Caco-2 (cell line): ENCODE measurements at regions of chr3 and their contacts with region 1.

Region 1: DNA sequence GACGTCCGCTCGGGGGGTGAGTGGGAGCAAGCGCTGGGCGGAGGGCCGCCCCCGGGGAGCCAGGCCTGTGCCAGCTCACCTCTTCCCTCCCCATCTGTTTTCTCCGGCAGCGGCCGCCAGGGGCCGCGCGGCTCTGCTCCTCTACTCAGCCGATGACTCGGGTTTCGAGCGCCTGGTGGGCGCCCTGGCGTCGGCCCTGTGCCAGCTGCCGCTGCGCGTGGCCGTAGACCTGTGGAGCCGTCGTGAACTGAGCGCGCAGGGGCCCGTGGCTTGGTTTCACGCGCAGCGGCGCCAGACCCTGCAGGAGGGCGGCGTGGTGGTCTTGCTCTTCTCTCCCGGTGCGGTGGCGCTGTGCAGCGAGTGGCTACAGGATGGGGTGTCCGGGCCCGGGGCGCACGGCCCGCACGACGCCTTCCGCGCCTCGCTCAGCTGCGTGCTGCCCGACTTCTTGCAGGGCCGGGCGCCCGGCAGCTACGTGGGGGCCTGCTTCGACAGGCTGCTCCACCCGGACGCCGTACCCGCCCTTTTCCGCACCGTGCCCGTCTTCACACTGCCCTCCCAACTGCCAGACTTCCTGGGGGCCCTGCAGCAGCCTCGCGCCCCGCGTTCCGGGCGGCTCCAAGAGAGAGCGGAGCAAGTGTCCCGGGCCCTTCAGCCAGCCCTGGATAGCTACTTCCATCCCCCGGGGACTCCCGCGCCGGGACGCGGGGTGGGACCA is 632 bp upstream of the CRELD1 start:
- DNase-seq: peak; percentile 81 to 85
- H3K4me3 ChIP-seq: peak overlapping the region; percentile 92
- H3K4me3 Mint-ChIP-seq: peak overlapping the region; percentile 88
- H3K27ac Mint-ChIP-seq: peak overlapping the region; percentile 96
- H3K4me1 ChIP-seq: peaks cover 6% of the 10 kb centered on the region; the same call in 1 of the 2 replicates
- H3K4me1 Mint-ChIP-seq: peaks cover 8% of the 10 kb centered on the region
- H3K27me3 ChIP-seq: no peaks in the 10 kb centered on the region
- H3K27me3 Mint-ChIP-seq: no peaks in the 10 kb centered on the region
- CTCF ChIP-seq: peak; percentile 67 to 89

Region 2: DNA sequence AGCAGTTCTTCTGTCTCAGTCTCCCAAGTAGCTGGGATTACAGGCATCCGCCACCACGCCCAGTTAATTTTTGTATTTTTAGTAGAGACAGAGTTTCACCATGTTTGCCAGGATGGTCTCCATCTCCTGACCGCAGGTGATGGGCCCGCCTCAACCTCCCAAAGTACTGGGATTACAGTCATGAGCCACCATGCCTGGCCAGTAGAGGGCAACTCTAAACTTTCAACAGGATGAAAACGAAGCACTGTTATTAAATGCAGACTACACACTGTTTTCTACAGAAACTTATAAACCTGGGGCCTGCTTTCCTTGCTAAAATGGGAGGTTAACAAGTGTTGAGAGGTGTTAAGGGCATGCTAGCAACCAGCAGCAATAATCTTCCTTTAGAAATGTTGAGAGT is 132.5 kb before region 1 on chr3:
- CTCF ChIA-PET with region 1: no interaction called
- POLR2A ChIA-PET with region 1: no interaction called
- intact Hi-C with region 1: no loop called
- DNase-seq: no peak
- H3K4me3 ChIP-seq: no peak overlapping the region
- H3K4me3 Mint-ChIP-seq: no peak overlapping the region
- H3K27ac Mint-ChIP-seq: no peak overlapping the region
- H3K4me1 ChIP-seq: no peaks in the 10 kb centered on the region
- H3K4me1 Mint-ChIP-seq: no peaks in the 10 kb centered on the region
- H3K27me3 ChIP-seq: no peaks in the 10 kb centered on the region
- H3K27me3 Mint-ChIP-seq: no peaks in the 10 kb centered on the region
- CTCF ChIP-seq: peak in 1 of 2 experiments; percentile 40

Region 3: DNA sequence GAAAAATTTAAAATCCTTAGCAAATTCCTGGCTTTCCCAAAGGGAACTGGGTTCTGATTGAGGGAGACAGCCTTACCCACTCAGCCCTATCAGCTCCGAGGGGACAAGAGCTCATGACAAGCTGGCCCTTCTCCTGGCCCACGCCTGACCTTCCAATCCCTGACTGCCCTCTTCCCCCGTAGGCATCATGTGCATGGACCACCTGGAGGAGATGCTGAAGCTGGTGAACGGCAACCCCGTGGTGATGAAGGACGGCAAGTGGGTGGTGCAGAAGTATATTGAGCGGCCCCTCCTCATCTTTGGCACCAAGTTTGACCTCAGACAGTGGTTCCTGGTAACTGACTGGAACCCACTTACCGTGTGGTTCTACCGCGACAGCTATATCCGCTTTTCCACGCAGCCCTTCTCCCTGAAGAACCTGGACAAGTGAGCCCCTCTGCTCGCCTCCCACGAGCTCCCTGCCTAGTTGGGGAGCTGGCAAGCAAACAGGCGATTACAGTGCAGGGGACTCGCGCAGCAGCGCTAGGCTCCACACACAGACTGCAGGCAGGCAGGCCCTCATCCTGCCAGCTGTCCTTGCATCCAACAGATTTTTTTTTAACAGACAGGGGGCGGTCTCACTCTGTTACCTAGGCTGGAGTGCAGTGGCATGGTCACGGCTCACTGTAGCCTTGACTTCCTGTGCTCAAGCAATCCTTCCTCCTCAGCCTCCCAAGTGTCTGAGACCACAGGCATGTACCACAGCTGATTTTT is 106.0 kb before region 1 on chr3:
- CTCF ChIA-PET with region 1: interaction called, 3 read pairs
- POLR2A ChIA-PET with region 1: interaction called, 5 read pairs
- intact Hi-C with region 1: loop called (anchors 5 kb)
- DNase-seq: peak in 1 of 2 experiments; percentile 64
- H3K4me3 ChIP-seq: no peak overlapping the region
- H3K4me3 Mint-ChIP-seq: no peak overlapping the region
- H3K27ac Mint-ChIP-seq: no peak overlapping the region
- H3K4me1 ChIP-seq: no peaks in the 10 kb centered on the region
- H3K4me1 Mint-ChIP-seq: no peaks in the 10 kb centered on the region
- H3K27me3 ChIP-seq: no peaks in the 10 kb centered on the region
- H3K27me3 Mint-ChIP-seq: no peaks in the 10 kb centered on the region
- CTCF ChIP-seq: peak; percentile 8 to 31

Region 4: DNA sequence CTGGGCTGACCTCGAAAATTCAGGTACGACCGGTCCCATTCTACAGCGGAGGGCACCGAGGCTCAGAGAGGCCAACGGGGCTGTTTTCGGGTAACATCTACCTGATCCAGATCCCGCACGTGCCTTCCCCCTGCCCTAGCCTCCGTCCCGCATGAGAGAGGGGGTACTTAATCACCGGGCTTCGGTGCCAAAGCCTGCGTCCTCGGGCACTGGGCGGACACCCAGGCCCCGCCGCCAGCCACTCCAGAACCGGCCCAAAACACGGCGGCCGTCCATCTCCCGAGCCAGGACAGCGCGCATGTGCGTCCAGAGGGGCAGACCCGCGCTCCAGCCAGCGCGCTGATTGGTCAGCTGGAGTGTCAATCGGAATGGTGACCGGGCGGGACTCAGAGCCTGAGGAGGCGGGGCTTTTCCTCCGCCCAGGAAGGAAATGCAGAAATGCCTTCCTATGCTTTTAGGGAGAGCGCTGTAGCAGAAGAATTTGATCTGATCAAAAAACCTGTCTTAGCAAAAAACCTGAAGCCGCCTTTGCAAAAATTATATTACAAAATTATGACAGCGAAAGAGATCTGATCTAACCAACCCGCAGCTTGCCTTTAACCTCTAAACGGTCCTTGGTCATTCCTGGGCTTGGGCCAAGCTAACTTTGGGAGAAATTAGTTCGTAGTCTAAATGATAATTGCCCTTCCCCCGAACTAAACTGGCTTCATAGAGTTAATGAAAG is 89.1 kb before region 1 on chr3 and contains the start of gene RPUSD3:
- CTCF ChIA-PET with region 1: interaction called, 3 read pairs
- POLR2A ChIA-PET with region 1: interaction called, 9 read pairs
- intact Hi-C with region 1: loop called (anchors 5 kb)
- DNase-seq: peak; percentile 96 to 98
- H3K4me3 ChIP-seq: peak within 1 kb of the TSS; percentile 79
- H3K4me3 Mint-ChIP-seq: peak within 1 kb of the TSS; percentile 99
- H3K27ac Mint-ChIP-seq: peak within 1 kb of the TSS; percentile 94
- H3K4me1 ChIP-seq: peaks cover 20% of the 10 kb centered on the region
- H3K4me1 Mint-ChIP-seq: peaks cover 14% of the 10 kb centered on the region
- H3K27me3 ChIP-seq: no peaks in the 10 kb centered on the region
- H3K27me3 Mint-ChIP-seq: no peaks in the 10 kb centered on the region
- CTCF ChIP-seq: no peak
- total RNA-seq, gene RPUSD3: 54.8 and 61.8 TPM in 2 replicates

Region 5: DNA sequence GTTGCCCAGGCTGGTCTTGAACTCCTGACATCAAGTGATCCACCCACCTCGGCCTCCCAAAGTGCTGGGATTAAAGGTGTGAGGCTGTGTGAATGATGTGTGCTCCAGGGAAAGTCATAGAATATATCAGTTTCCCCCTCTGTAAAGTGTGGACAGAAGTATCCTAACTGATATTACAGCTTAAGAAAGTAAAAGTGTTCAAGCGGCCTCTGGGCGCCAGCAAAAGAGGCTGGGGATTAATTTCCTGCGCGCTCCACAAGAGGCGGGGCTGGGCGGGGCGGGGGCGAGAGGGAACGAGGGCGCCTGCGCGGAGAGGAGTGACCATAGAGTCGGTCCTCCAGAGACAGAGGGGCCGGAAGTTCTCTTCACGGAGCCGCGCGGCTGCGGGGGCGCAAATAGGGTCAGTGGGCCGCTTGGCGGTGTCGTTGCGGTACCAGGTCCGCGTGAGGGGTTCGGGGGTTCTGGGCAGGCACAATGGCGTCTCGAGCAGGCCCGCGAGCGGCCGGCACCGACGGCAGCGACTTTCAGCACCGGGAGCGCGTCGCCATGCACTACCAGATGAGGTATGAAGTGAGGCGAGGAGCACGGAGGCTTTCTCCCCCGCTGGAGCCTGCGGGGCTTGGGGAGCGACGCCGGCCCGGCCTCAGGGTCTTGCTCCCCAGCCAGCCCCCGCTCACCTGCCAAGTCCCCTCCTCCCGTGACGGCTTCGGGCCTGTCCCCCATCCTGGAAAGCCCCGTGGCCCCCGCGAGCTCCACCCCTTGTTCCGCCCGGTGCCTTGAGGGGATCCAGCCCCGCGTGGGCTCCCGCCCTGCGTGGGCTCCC is 42.5 kb before region 1 on chr3 and contains the start of gene JAGN1:
- CTCF ChIA-PET with region 1: no interaction called
- POLR2A ChIA-PET with region 1: interaction called, 4 read pairs
- intact Hi-C with region 1: loop called (anchors 2 kb)
- DNase-seq: peak; percentile 88 to 89
- H3K4me3 ChIP-seq: peak within 1 kb of the TSS; percentile 99
- H3K4me3 Mint-ChIP-seq: peak within 1 kb of the TSS; percentile 83
- H3K27ac Mint-ChIP-seq: peak within 1 kb of the TSS; percentile 91
- H3K4me1 ChIP-seq: no peaks in the 10 kb centered on the region
- H3K4me1 Mint-ChIP-seq: peaks cover 11% of the 10 kb centered on the region
- H3K27me3 ChIP-seq: no peaks in the 10 kb centered on the region
- H3K27me3 Mint-ChIP-seq: no peaks in the 10 kb centered on the region
- CTCF ChIP-seq: no peak
- total RNA-seq, gene JAGN1: 34.2 and 35.9 TPM in 2 replicates

Region 6: GRCh38 chr3:9897408-9898372 is 35.3 kb before region 1 on chr3:
- CTCF ChIA-PET with region 1: interaction called, 14 read pairs
- POLR2A ChIA-PET with region 1: interaction called, 17 read pairs
- intact Hi-C with region 1: loop called (anchors 1 kb)
- DNase-seq: peak; percentile 84 to 91
- H3K4me3 ChIP-seq: no peak overlapping the region
- H3K4me3 Mint-ChIP-seq: peak overlapping the region; percentile 17
- H3K27ac Mint-ChIP-seq: peak overlapping the region; percentile 84
- H3K4me1 ChIP-seq: peaks cover 64% of the 10 kb centered on the region
- H3K4me1 Mint-ChIP-seq: peaks cover 34% of the 10 kb centered on the region
- H3K27me3 ChIP-seq: no peaks in the 10 kb centered on the region
- H3K27me3 Mint-ChIP-seq: no peaks in the 10 kb centered on the region
- CTCF ChIP-seq: no peak

Region 7: GRCh38 chr3:9915254-9916141 is 17.5 kb before region 1 on chr3:
- CTCF ChIA-PET with region 1: interaction called, 63 read pairs
- POLR2A ChIA-PET with region 1: interaction called, 31 read pairs
- intact Hi-C with region 1: loop called (anchors 1 kb)
- DNase-seq: peak; percentile 67 to 84
- H3K4me3 ChIP-seq: peak overlapping the region; percentile 73
- H3K4me3 Mint-ChIP-seq: peak overlapping the region; percentile 89
- H3K27ac Mint-ChIP-seq: peak overlapping the region; percentile 76
- H3K4me1 ChIP-seq: peaks cover 21% of the 10 kb centered on the region
- H3K4me1 Mint-ChIP-seq: no peaks in the 10 kb centered on the region
- H3K27me3 ChIP-seq: no peaks in the 10 kb centered on the region
- H3K27me3 Mint-ChIP-seq: no peaks in the 10 kb centered on the region
- CTCF ChIP-seq: peak; percentile 9 to 40

Region 8: GRCh38 chr3:9946112-9947024 is 13.4 kb after region 1 on chr3:
- CTCF ChIA-PET with region 1: interaction called, 81 read pairs
- POLR2A ChIA-PET with region 1: interaction called, 49 read pairs
- intact Hi-C with region 1: loop called (anchors 1 kb)
- DNase-seq: peak; percentile 89 to 93
- H3K4me3 ChIP-seq: peak overlapping the region; percentile 60
- H3K4me3 Mint-ChIP-seq: peak overlapping the region; percentile 83
- H3K27ac Mint-ChIP-seq: peak overlapping the region; percentile 83
- H3K4me1 ChIP-seq: 0 out of 2 replicates have a peak, but pooled peaks cover 6% of the 10 kb centered on the region
- H3K4me1 Mint-ChIP-seq: no peaks in the 10 kb centered on the region
- H3K27me3 ChIP-seq: no peaks in the 10 kb centered on the region
- H3K27me3 Mint-ChIP-seq: no peaks in the 10 kb centered on the region
- CTCF ChIP-seq: peak; percentile 50 to 56

Region 9: GRCh38 chr3:10248184-10249080 is 315.4 kb after region 1 on chr3 and contains the start of gene TATDN2:
- CTCF ChIA-PET with region 1: no interaction called
- POLR2A ChIA-PET with region 1: no interaction called
- intact Hi-C with region 1: no loop called
- DNase-seq: peak; percentile 95 to 97
- H3K4me3 ChIP-seq: peak within 1 kb of the TSS; percentile 76
- H3K4me3 Mint-ChIP-seq: peak within 1 kb of the TSS; percentile 92
- H3K27ac Mint-ChIP-seq: peak within 1 kb of the TSS; percentile 92
- H3K4me1 ChIP-seq: peaks cover 12% of the 10 kb centered on the region; the same call in 1 of the 2 replicates
- H3K4me1 Mint-ChIP-seq: peaks cover 5% of the 10 kb centered on the region
- H3K27me3 ChIP-seq: no peaks in the 10 kb centered on the region
- H3K27me3 Mint-ChIP-seq: no peaks in the 10 kb centered on the region
- CTCF ChIP-seq: no peak
- total RNA-seq, gene TATDN2: 29.3 and 32.1 TPM in 2 replicates